A673 (cell line): ENCODE measurements at regions of chr6 and their contacts with region 1.

Region 1: GRCh38 chr6:97497713-97498331 is 214.8 kb upstream of the MMS22L start:
- DNase-seq: peak; percentile 93
- H3K4me3 ChIP-seq: no peak overlapping the region
- H3K27ac ChIP-seq: peak overlapping the region; percentile 76
- H3K4me1 ChIP-seq: peaks cover 34% of the 10 kb centered on the region
- H3K27me3 ChIP-seq: no peaks in the 10 kb centered on the region
- CTCF ChIP-seq: peak; percentile 93

Region 2: DNA sequence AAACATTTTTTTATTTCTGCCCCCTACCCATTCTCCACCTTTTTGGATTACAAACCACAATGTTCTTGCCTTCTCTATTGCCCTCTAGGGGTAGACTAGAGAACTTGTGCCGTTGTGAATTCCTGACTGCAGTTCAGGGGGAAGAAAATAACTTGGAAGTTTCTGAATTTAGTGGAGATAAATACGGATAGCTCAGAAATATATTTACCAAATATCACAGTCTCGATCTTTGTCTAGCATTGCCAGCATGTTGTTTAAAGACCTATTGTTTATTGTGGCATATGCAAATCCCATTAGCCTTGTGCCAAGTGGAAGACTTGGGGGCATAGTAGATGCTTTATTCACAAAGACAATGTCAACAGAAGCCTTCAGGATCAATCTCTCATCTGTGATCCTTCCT is 60.7 kb before region 1 on chr6:
- CTCF ChIA-PET with region 1: no interaction called
- POLR2A ChIA-PET with region 1: no interaction called
- intact Hi-C with region 1: loop called (anchors 2 kb)
- DNase-seq: peak; percentile 71
- H3K4me3 ChIP-seq: no peak overlapping the region
- H3K27ac ChIP-seq: no peak overlapping the region
- H3K4me1 ChIP-seq: peaks cover 18% of the 10 kb centered on the region
- H3K27me3 ChIP-seq: no peaks in the 10 kb centered on the region
- CTCF ChIP-seq: peak; percentile 80

Region 3: DNA sequence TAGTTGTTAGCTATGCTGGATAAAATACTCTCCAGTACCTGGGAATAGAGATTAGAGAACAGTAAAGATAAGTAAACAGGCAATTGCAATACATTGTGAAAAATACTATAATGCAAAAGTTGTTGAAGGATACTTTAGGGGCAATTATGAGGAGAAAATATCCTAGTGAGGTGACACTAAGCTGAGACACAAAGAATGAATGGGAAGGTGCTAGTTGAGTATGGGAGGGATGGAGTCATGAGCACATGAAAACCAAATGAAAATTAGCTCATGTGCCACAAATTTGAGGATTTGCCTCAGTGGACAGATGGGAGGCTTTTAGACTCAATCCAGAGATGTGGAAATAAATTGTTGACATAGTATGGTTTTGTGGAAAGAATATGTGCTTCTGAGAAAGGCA is 155.7 kb after region 1 on chr6:
- CTCF ChIA-PET with region 1: no interaction called
- POLR2A ChIA-PET with region 1: no interaction called
- intact Hi-C with region 1: loop called (anchors 2 kb)
- DNase-seq: peak; percentile 86
- H3K4me3 ChIP-seq: no peak overlapping the region
- H3K27ac ChIP-seq: peak overlapping the region; percentile 84
- H3K4me1 ChIP-seq: peaks cover 30% of the 10 kb centered on the region
- H3K27me3 ChIP-seq: no peaks in the 10 kb centered on the region
- CTCF ChIP-seq: no peak

Region 4: DNA sequence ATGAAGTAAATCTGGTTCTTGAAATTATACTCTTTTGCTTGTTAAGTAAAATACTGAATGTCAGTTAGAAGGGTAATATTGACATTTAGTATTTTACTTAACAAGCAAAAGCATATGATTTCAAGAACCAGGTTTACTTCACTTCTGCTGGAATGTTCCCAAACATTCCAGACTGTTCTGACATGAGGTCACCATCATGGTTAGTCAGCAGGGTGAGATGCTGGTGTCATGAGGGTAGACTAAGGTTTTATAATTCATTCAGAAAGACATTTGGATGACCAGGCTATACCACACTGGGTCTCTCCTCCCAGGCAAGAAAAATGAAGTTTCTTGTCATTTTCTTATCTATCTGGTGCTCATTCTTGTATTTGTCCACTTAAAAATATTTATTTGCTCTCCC is 199.6 kb after region 1 on chr6:
- CTCF ChIA-PET with region 1: no interaction called
- POLR2A ChIA-PET with region 1: no interaction called
- intact Hi-C with region 1: loop called (anchors 5 kb)
- DNase-seq: no peak
- H3K4me3 ChIP-seq: no peak overlapping the region
- H3K27ac ChIP-seq: no peak overlapping the region
- H3K4me1 ChIP-seq: peaks cover 13% of the 10 kb centered on the region
- H3K27me3 ChIP-seq: no peaks in the 10 kb centered on the region
- CTCF ChIP-seq: no peak

Region 5: DNA sequence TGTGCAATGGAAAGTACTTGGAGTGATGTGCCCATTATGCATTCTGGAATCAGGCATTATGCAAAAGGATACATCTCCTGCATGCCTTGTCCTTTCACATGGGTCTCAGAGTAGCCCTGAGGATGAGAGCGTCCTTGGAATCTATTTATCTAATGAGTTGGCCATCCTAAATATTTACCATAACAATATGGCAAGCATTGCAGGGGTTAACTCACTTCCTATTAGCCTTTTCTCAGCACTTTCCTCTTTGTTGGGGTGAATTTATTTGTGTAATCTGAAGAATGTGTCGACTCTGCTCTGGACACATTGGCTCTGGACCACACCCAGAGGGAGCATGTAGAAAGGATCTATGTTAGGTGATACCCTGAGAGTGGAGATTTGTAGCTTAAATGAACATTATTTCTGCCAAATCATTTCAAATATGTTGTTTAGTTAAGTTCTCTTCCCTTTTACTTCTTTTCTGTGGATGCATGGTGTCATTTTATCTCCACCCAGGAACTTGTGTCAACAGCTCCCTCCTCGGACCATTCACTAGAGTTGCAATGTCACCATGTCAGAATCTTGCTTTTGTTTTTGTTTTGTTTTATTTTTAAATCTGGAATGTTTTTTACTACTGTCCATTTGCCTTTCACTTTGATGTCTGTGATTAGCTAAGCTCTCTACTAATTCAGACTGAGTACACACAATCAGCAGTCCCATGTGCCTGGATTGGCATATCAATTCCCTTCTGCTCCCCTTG is 542.2 kb after region 1 on chr6:
- CTCF ChIA-PET with region 1: no interaction called
- POLR2A ChIA-PET with region 1: no interaction called
- intact Hi-C with region 1: loop called (anchors 5 kb)
- DNase-seq: peak; percentile 63
- H3K4me3 ChIP-seq: no peak overlapping the region
- H3K27ac ChIP-seq: no peak overlapping the region
- H3K4me1 ChIP-seq: peaks cover 9% of the 10 kb centered on the region
- H3K27me3 ChIP-seq: no peaks in the 10 kb centered on the region
- CTCF ChIP-seq: peak; percentile 81